ENCODE measurements at regions of chr1 and their contacts with region 1.

Region 1: DNA sequence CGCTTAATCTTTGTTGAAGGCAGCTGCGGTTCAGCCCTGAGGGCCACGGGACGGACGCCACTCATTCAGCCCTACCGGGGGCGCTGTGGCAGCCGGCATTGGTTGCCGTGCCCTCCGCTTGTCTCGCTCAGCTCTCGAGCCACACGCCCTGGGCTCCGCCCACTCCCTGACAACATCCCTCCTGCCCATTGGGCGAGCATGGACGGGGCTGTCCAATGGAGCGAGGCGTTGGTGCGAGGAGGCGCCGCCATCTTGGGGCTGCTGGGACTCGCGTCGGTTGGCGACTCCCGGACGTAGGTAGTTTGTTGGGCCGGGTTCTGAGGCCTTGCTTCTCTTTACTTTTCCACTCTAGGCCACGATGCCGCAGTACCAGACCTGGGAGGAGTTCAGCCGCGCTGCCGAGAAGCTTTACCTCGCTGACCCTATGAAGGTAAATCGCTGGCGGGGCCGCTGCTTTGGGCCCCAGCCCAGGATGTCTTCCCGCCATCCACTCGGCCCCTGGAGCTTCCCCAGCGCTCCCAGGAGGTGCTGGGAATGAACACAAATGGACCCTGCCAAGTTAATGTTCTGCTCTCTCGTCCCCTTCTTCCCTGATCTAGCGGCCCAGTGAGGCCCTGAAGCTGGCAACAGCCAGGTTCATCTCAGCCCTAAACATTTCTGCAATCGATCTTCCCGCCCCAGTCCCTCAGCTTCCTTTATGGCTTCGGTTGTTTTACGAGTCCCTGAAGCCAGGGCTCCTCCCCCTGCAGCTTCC is at the start of gene SRP9:
- DNase-seq: peak; percentile 100
- H3K4me3 Mint-ChIP-seq: no peak within 1 kb of the TSS
- H3K27ac Mint-ChIP-seq: no peak within 1 kb of the TSS
- H3K4me1 Mint-ChIP-seq: peaks cover 21% of the 10 kb centered on the region
- H3K27me3 Mint-ChIP-seq: no peaks in the 10 kb centered on the region
- CTCF ChIP-seq: peak; percentile 96
- total RNA-seq, gene SRP9: 417 and 511 TPM in 2 replicates

Region 2: GRCh38 chr1:225474986-225475820 is 302.6 kb before region 1 on chr1:
- CTCF ChIA-PET with region 1: interaction called, 712 read pairs
- POLR2A ChIA-PET with region 1: interaction called, 19 read pairs
- intact Hi-C with region 1: loop called (anchors 1 kb)
- DNase-seq: peak; percentile 85
- H3K4me3 Mint-ChIP-seq: no peak overlapping the region
- H3K27ac Mint-ChIP-seq: no peak overlapping the region
- H3K4me1 Mint-ChIP-seq: no peaks in the 10 kb centered on the region
- H3K27me3 Mint-ChIP-seq: no peaks in the 10 kb centered on the region
- CTCF ChIP-seq: peak; percentile 100

Region 3: GRCh38 chr1:225554216-225554812 is 223.4 kb before region 1 on chr1:
- CTCF ChIA-PET with region 1: interaction called, 245 read pairs
- POLR2A ChIA-PET with region 1: interaction called, 25 read pairs
- intact Hi-C with region 1: loop called (anchors 1 kb)
- DNase-seq: peak; percentile 67
- H3K4me3 Mint-ChIP-seq: no peak overlapping the region
- H3K27ac Mint-ChIP-seq: no peak overlapping the region
- H3K4me1 Mint-ChIP-seq: peaks cover 2% of the 10 kb centered on the region
- H3K27me3 Mint-ChIP-seq: no peaks in the 10 kb centered on the region
- CTCF ChIP-seq: peak; percentile 85

Region 4: GRCh38 chr1:225735252-225736149 is 42.3 kb before region 1 on chr1:
- CTCF ChIA-PET with region 1: interaction called, 228 read pairs
- POLR2A ChIA-PET with region 1: interaction called, 230 read pairs
- intact Hi-C with region 1: loop called (anchors 1 kb)
- DNase-seq: peak; percentile 100
- H3K4me3 Mint-ChIP-seq: peak overlapping the region; percentile 60
- H3K27ac Mint-ChIP-seq: peak overlapping the region; percentile 89
- H3K4me1 Mint-ChIP-seq: peaks cover 33% of the 10 kb centered on the region
- H3K27me3 Mint-ChIP-seq: no peaks in the 10 kb centered on the region
- CTCF ChIP-seq: peak; percentile 9

Region 5: GRCh38 chr1:225825607-225826007 is 47.8 kb after region 1 on chr1:
- CTCF ChIA-PET with region 1: interaction called, 33 read pairs
- POLR2A ChIA-PET with region 1: interaction called, 85 read pairs
- intact Hi-C with region 1: no loop called
- DNase-seq: no peak
- H3K4me3 Mint-ChIP-seq: no peak overlapping the region
- H3K27ac Mint-ChIP-seq: peak overlapping the region; percentile 3
- H3K4me1 Mint-ChIP-seq: peaks cover 21% of the 10 kb centered on the region
- H3K27me3 Mint-ChIP-seq: no peaks in the 10 kb centered on the region
- CTCF ChIP-seq: no peak

Region 6: GRCh38 chr1:225923692-225924555 is 146.2 kb after region 1 on chr1 and contains the start of gene PYCR2:
- CTCF ChIA-PET with region 1: interaction called, 12 read pairs
- POLR2A ChIA-PET with region 1: interaction called, 35 read pairs
- intact Hi-C with region 1: loop called (anchors 1 kb)
- DNase-seq: peak; percentile 99
- H3K4me3 Mint-ChIP-seq: peak within 1 kb of the TSS; percentile 99
- H3K27ac Mint-ChIP-seq: peak within 1 kb of the TSS; percentile 95
- H3K4me1 Mint-ChIP-seq: peaks cover 42% of the 10 kb centered on the region
- H3K27me3 Mint-ChIP-seq: no peaks in the 10 kb centered on the region
- CTCF ChIP-seq: no peak
- total RNA-seq, gene PYCR2: 172 and 173 TPM in 2 replicates

Region 7: GRCh38 chr1:226044514-226045101 is 266.8 kb after region 1 on chr1:
- CTCF ChIA-PET with region 1: no interaction called
- POLR2A ChIA-PET with region 1: no interaction called
- intact Hi-C with region 1: no loop called
- DNase-seq: no peak
- H3K4me3 Mint-ChIP-seq: no peak overlapping the region
- H3K27ac Mint-ChIP-seq: no peak overlapping the region
- H3K4me1 Mint-ChIP-seq: peaks cover 10% of the 10 kb centered on the region
- H3K27me3 Mint-ChIP-seq: peaks cover 19% of the 10 kb centered on the region
- CTCF ChIP-seq: no peak

Region 8: DNA sequence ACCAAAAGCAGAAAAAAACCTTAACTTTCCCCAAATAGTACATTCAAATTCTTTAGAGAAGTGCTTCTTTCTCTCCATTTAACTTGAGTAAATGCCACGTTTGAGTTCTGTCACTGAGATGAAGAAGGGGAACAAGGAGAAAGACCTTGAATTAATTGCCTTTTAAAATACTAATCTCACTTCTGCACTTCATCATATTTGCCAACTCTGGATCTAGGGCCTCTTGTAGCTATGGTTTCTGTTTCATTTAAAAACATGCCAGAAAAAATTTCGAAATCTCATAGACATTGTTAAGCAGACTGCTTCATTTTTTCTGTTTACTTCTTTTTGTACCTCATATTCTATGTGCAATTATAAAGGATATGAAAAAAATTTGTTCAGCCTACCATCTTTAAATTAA is 470.3 kb after region 1 on chr1:
- CTCF ChIA-PET with region 1: no interaction called
- POLR2A ChIA-PET with region 1: no interaction called
- intact Hi-C with region 1: no loop called
- DNase-seq: peak; percentile 33
- H3K4me3 Mint-ChIP-seq: no peak overlapping the region
- H3K27ac Mint-ChIP-seq: peak overlapping the region; percentile 87
- H3K4me1 Mint-ChIP-seq: peaks cover 5% of the 10 kb centered on the region
- H3K27me3 Mint-ChIP-seq: no peaks in the 10 kb centered on the region
- CTCF ChIP-seq: no peak